ENCODE measurements at regions of chr13 and their contacts with region 1.

Region 1: GRCh38 chr13:49278211-49278610 is 30.5 kb downstream of the CDADC1 start:
- DNase-seq: no peak
- H3K4me3 ChIP-seq: no peak overlapping the region
- H3K27ac ChIP-seq: no peak overlapping the region
- H3K4me1 ChIP-seq: no peaks in the 10 kb centered on the region
- H3K27me3 ChIP-seq: no peaks in the 10 kb centered on the region
- CTCF ChIP-seq: no peak
- POLR2A ChIP-seq: no peak

Region 2: GRCh38 chr13:49165798-49166752 is 112.1 kb before region 1 on chr13:
- intact Hi-C with region 1: no loop called
- DNase-seq: no peak
- H3K4me3 ChIP-seq: no peak overlapping the region
- H3K27ac ChIP-seq: no peak overlapping the region
- H3K4me1 ChIP-seq: no peaks in the 10 kb centered on the region
- H3K27me3 ChIP-seq: no peaks in the 10 kb centered on the region
- CTCF ChIP-seq: no peak
- POLR2A ChIP-seq: no peak

Region 3: DNA sequence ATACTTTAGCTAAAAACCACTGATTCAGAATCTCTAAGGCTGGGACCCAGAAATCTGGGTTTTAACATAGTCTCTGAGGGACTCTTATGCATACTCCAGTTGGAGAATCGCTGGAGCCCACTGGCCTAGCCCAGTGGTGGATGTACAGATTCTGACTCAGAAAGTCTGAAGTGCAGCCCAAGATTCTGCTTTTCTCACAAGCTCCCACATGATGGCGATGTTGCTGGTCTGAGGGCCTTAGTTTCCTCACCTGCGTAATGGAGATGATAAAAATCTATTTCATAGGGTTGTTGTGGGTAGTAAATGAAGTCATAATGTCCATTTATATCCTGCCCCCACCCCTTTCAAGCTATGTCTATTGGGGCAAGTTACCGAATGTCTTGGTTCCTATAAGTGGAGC is 38.2 kb before region 1 on chr13:
- intact Hi-C with region 1: loop called (anchors 5 kb)
- DNase-seq: peak in 4 of 7 donors; percentile 37 to 47 (median 40)
- H3K4me3 ChIP-seq: no peak overlapping the region
- H3K27ac ChIP-seq: no peak overlapping the region
- H3K4me1 ChIP-seq: no peaks in the 10 kb centered on the region
- H3K27me3 ChIP-seq: no peaks in the 10 kb centered on the region
- CTCF ChIP-seq: peak; percentile 19 to 57 (median 44)
- POLR2A ChIP-seq: no peak

Region 4: DNA sequence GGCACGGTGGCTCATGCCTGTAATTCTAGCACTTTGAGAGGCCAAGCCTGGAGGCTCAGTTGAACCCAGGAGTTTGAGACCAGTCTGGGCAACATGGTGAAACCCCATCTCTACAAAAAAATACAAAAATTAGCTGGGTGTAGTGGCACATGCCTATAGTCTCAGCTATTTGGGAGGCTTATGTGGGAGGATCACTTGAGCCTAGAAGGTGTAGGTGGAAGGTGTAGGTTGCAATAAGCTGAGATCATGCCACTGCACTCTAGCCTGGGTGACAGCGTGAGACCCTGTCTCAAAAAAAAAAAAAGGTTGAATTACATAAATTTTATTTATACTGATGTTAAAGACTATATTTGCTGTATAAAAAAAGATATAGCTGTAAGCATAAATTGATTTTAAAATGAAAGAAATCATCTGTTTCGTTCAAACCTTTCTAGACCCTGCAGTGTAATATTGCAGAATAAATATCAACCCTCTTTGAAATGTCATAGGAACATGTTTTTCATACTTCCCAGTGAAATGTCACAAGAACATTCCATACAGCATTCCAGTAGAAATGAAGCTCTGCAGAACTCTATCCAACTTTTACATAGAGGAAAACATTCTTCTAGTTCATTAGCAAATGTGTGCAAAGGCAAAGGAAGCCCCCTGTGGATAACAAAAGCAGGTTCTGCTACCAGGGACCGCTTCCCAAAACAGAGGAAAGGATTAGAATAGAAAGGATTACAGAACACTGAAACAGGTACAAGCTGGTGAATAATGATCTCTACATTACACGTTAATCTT is 89.6 kb after region 1 on chr13:
- intact Hi-C with region 1: no loop called
- DNase-seq: no peak
- H3K4me3 ChIP-seq: no peak overlapping the region
- H3K27ac ChIP-seq: no peak overlapping the region
- H3K4me1 ChIP-seq: peaks cover 5 to 23% of the 10 kb centered on the region in 2 donors
- H3K27me3 ChIP-seq: no peaks in the 10 kb centered on the region
- CTCF ChIP-seq: peak in 1 of 6 experiments; percentile 24
- POLR2A ChIP-seq: no peak

Region 5: DNA sequence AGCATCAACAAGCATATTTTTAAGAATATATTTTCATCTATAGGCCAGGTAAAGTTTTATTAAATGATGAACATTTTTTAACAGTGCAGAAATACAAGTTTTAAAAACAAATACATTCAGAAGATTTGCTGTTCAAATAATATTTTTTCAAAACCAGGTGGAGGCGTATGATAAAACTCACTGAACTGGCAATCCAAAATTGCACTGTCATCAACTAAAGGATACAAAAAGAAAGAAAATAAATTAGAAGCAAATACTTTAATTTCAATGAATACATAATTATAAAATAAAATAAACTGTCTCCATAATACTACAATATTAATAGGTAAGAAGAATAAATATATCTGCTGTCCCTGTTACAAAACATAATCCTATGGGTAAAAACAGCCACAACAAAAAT is 636.7 kb after region 1 on chr13:
- intact Hi-C with region 1: no loop called
- DNase-seq: no peak
- H3K4me3 ChIP-seq: no peak overlapping the region
- H3K27ac ChIP-seq: no peak overlapping the region
- H3K4me1 ChIP-seq: no peaks in the 10 kb centered on the region
- H3K27me3 ChIP-seq: no peaks in the 10 kb centered on the region
- CTCF ChIP-seq: no peak
- POLR2A ChIP-seq: no peak

Measured in adrenal gland (tissue), 19 donors.